Dendritic cell treated with granulocyte-macrophage colony-stimulating factor and Interleukin-4, amounts not matched to agents 40 ng/mL and 50 ng/mL, for 4 days (primary cell): ENCODE measurements at regions of chr4 and their contacts with region 1.

Region 1: DNA sequence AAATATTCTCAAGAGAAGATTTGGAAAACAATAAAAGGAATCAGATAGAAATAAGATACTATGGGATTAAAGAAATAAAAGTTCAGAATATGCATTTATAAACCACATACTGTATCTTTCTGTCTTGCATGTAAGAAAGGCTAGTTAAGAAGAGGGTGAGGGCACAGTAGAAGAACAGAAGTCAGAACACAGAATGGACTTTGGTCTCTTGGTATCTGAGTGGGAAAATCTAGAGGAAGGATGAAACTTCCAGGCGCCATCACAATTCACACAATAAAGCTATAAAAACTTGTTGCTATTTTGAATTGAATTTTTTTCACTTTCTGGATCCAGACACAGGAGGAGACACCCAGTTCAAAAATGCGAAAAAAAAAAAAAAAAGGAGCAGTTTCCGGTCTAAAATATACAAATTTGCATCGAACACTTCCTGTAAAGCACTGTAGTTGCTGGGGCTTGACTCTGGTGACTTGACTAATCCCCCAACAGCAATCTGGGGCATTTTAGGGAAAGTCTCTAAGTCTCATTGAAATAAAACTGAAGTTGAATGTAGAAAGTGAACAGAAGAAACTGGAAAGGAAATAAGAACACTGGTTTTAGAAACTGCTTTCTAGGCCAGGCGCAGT is 8.1 kb upstream of the NAAA start:
- H3K4me3 Mint-ChIP-seq: no peak overlapping the region
- H3K27ac Mint-ChIP-seq: no peak overlapping the region
- H3K4me1 Mint-ChIP-seq: peaks cover 18% of the 10 kb centered on the region
- H3K27me3 Mint-ChIP-seq: no peaks in the 10 kb centered on the region

Region 2: DNA sequence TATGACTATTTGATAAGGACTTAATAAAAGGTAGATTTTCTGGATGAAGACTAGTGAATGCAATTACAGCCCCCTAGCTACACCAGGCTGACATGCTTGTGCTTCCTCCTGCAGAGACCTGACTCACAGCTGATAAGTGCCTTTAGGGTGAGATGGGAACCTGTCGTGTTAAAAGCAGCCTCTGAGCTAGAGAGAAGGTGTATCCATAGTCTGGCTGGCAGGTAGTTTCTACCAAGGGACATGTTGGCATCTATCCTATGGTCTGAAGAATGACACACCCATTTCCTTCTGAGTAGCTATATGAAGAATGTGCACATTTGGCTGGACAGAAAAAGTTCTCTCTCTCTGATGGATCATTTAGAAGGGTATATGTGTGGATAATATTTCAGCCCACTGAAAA is 951.9 kb before region 1 on chr4:
- intact Hi-C with region 1: no loop called
- H3K4me3 Mint-ChIP-seq: no peak overlapping the region
- H3K27ac Mint-ChIP-seq: no peak overlapping the region
- H3K4me1 Mint-ChIP-seq: no peaks in the 10 kb centered on the region
- H3K27me3 Mint-ChIP-seq: peaks cover 3% of the 10 kb centered on the region

Region 3: GRCh38 chr4:75904076-75904475 is 44.9 kb before region 1 on chr4:
- intact Hi-C with region 1: loop called (anchors 5 kb)
- H3K4me3 Mint-ChIP-seq: no peak overlapping the region
- H3K27ac Mint-ChIP-seq: no peak overlapping the region
- H3K4me1 Mint-ChIP-seq: peaks cover 29% of the 10 kb centered on the region
- H3K27me3 Mint-ChIP-seq: no peaks in the 10 kb centered on the region

Region 4: DNA sequence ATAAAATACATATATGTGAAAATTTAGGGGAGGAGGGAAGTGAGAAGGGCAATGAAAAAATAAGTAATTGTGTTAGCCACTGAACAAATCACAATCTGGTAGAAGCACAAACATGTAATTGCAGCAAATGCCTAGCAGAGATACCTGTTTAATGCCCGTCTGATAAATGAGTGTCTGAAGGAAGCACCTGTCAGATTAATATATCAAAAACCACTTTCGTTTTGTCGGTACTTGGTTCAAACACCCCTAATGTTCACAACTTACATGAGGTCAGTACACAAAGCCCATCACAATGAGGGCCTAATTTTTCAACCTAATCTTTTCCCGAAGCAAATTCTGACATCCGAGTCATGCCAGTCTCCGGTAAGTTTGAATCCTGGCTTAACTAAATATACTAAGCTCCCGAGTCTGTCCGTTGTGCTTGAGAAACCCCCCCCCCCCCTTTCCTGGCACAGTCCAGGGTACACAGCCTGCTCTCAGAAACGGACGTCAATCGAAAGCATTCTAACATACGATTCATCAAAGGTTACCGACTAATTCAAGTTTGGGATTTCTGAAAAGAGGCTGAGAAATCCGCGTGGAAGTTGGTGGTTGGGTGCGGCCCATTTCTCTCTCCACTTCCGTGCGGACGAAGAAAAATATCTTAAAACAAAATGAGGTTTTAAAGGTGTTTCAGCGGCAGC is 41.1 kb after region 1 on chr4:
- intact Hi-C with region 1: loop called (anchors 5 kb)
- H3K4me3 Mint-ChIP-seq: peak overlapping the region; percentile 87
- H3K27ac Mint-ChIP-seq: peak overlapping the region; percentile 89
- H3K4me1 Mint-ChIP-seq: peaks cover 29% of the 10 kb centered on the region
- H3K27me3 Mint-ChIP-seq: peaks cover 6% of the 10 kb centered on the region